Activated CD8-positive, alpha-beta T cell treated with anti-CD3 and anti-CD28 coated beads for 36 hours (primary cell): ENCODE measurements at regions of chr4 and their contacts with region 1.

Region 1: GRCh38 chr4:15882675-15883086 is 55.9 kb downstream of the FGFBP1 start:
- DNase-seq: peak; percentile 59
- ATAC-seq: peak; percentile 92
- H3K4me3 Mint-ChIP-seq: no peak overlapping the region
- H3K27ac Mint-ChIP-seq: no peak overlapping the region
- H3K4me1 Mint-ChIP-seq: peaks cover 1% of the 10 kb centered on the region
- H3K27me3 Mint-ChIP-seq: peaks cover 2% of the 10 kb centered on the region
- CTCF ChIP-seq: peak; percentile 98

Region 2: GRCh38 chr4:15738877-15739276 is 143.8 kb before region 1 on chr4:
- CTCF ChIA-PET with region 1: interaction called, 14 read pairs
- POLR2A ChIA-PET with region 1: no interaction called
- intact Hi-C with region 1: loop called (anchors 10 kb)
- DNase-seq: peak; percentile 17
- ATAC-seq: peak; percentile 79
- H3K4me3 Mint-ChIP-seq: no peak overlapping the region
- H3K27ac Mint-ChIP-seq: peak overlapping the region; percentile 17
- H3K4me1 Mint-ChIP-seq: peaks cover 34% of the 10 kb centered on the region
- H3K27me3 Mint-ChIP-seq: no peaks in the 10 kb centered on the region
- CTCF ChIP-seq: no peak

Region 3: GRCh38 chr4:15778289-15779241 is 104.1 kb before region 1 on chr4 and contains the start of gene CD38:
- CTCF ChIA-PET with region 1: no interaction called
- POLR2A ChIA-PET with region 1: no interaction called
- intact Hi-C with region 1: no loop called
- DNase-seq: peak; percentile 84
- ATAC-seq: peak; percentile 81
- H3K4me3 Mint-ChIP-seq: peak within 1 kb of the TSS; percentile 85
- H3K27ac Mint-ChIP-seq: peak within 1 kb of the TSS; percentile 88
- H3K4me1 Mint-ChIP-seq: peaks cover 67% of the 10 kb centered on the region
- H3K27me3 Mint-ChIP-seq: peaks cover 15% of the 10 kb centered on the region
- CTCF ChIP-seq: no peak
- total RNA-seq, gene CD38: 24.3 to 25.6 TPM

Region 4: DNA sequence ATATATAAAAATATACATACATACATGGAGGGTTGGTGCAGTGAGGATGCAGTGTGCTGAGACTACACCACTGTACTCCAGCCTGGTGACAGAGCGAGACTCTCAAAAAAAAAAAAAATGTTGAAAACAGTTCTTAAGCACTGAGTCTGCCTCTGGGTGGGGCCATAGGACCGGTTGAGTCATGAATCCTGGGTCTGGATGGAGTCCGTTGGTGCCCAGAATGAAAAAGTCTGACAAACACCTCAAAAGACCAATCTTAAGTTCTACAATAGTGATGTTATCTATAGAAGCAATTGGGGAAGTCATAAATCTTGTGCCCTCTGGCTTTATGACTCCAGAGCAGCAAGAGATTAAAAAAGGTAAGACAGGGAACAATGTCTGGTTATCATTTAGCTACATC is 14.6 kb before region 1 on chr4:
- CTCF ChIA-PET with region 1: interaction called, 26 read pairs
- POLR2A ChIA-PET with region 1: no interaction called
- intact Hi-C with region 1: no loop called
- DNase-seq: peak; percentile 28
- ATAC-seq: peak; percentile 72
- H3K4me3 Mint-ChIP-seq: no peak overlapping the region
- H3K27ac Mint-ChIP-seq: no peak overlapping the region
- H3K4me1 Mint-ChIP-seq: no peaks in the 10 kb centered on the region
- H3K27me3 Mint-ChIP-seq: peaks cover 5% of the 10 kb centered on the region
- CTCF ChIP-seq: no peak

Region 5: DNA sequence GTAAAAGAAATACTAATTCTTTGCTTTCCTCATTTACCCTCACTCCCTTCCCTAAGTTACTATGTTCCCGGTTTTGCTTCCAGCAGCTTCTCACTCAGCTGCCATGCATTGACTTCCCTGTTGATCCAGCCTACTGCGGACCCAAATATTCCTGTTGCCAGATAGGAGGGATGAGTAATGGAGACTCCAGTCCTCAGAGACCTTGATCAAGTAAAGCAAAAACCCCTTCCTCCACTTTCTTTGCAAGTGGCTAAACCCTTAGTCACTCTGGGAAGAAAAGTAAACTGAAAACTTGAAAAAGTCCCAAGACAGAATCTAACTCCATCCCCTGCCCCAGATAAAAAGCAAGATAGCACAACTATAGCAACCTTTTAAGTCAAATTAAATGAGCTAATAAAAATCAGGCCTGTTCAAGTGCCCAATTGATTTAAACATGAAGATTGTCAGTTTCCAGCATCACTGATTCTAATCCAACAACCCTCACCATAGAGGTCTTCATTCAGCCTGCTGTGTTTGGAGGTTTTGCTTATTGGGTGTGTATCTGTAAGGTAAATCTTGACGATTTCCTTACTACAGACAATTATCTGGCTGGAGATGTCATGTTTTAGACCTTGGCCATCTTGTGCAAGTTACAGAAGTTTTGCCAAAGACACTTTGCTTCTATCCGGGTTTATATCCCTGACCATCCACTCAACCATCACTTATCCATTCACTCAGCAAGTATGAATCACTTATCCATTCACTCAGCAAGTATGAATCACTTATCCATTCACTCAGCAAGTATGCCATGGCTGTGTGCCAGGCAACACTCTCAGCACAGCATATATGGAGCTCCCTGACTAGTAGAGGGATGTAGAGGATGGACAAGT is 38.3 kb after region 1 on chr4:
- CTCF ChIA-PET with region 1: interaction called, 10 read pairs
- POLR2A ChIA-PET with region 1: no interaction called
- intact Hi-C with region 1: no loop called
- DNase-seq: no peak
- ATAC-seq: no peak
- H3K4me3 Mint-ChIP-seq: no peak overlapping the region
- H3K27ac Mint-ChIP-seq: no peak overlapping the region
- H3K4me1 Mint-ChIP-seq: no peaks in the 10 kb centered on the region
- H3K27me3 Mint-ChIP-seq: peaks cover 12% of the 10 kb centered on the region
- CTCF ChIP-seq: no peak

Region 6: DNA sequence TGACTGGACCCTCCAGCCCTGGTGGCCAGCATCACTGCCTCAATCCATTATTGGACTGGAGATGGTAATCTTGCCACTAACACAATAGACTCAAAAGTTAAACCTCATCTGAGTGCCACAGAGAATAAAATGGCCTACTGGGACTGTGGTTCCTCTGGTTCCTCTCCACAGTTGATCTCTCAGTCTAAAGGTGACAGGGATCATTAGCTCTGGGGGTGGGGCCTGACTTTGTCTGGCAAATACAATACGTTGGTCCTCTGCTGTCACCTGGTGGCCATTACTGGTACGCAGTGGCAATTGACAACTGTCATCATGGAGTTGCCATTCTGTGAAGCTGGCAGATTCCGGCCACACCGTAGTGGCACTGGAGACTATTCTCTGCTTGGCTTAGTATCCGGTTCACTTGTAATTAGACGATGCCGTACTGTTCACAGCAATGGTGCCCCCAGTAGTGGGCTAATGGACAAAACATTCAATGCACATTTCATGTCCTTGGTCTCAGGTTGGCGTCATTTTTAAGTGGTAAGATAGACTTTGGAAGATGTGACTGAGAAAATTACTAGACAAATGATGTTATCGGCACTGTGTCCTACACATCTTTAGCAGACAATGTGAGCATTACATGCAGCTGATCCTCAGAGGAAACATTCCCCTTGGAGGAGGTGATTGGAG is 73.6 kb after region 1 on chr4:
- CTCF ChIA-PET with region 1: interaction called, 203 read pairs
- POLR2A ChIA-PET with region 1: interaction called, 9 read pairs
- intact Hi-C with region 1: loop called (anchors 1 kb)
- DNase-seq: peak; percentile 96
- ATAC-seq: peak; percentile 90
- H3K4me3 Mint-ChIP-seq: no peak overlapping the region
- H3K27ac Mint-ChIP-seq: no peak overlapping the region
- H3K4me1 Mint-ChIP-seq: peaks cover 19% of the 10 kb centered on the region
- H3K27me3 Mint-ChIP-seq: peaks cover 2% of the 10 kb centered on the region
- CTCF ChIP-seq: peak; percentile 87

Region 7: DNA sequence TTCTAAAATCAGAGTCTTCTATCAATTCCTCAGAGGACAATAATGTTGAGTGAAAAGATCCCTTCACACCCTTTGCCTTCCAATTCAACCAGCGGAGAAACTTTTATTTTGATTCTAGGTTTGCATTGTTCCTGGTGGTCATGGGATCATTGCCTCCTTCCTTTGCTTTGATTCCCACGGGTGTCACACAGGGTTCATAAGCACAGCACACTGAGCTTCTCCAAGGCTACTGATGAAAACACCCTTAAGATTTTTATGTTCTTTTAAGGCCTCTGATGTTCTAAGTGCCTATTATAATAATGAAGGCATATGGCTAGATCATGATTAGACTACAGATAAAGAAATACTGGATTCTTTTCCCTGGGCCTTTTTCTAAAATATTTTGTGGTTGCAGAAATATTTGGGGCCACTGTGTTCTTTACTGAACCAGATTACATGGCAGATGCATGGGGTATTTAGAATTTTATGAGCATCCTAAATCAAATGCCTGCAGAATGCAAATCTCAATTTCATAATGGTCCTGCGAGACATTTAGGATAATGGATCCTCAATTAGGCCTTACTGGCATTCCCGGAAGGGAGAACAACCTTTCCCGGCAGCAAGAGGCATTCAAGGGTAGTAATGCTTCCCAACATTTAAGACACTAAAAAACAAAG is 124.2 kb after region 1 on chr4:
- CTCF ChIA-PET with region 1: interaction called, 55 read pairs
- POLR2A ChIA-PET with region 1: no interaction called
- intact Hi-C with region 1: no loop called
- DNase-seq: no peak
- ATAC-seq: no peak
- H3K4me3 Mint-ChIP-seq: no peak overlapping the region
- H3K27ac Mint-ChIP-seq: no peak overlapping the region
- H3K4me1 Mint-ChIP-seq: no peaks in the 10 kb centered on the region
- H3K27me3 Mint-ChIP-seq: peaks cover 2% of the 10 kb centered on the region
- CTCF ChIP-seq: no peak

Region 8: GRCh38 chr4:16225863-16226815 is 343.5 kb after region 1 on chr4 and contains the start of gene TAPT1:
- CTCF ChIA-PET with region 1: no interaction called
- POLR2A ChIA-PET with region 1: no interaction called
- intact Hi-C with region 1: no loop called
- DNase-seq: peak; percentile 80
- ATAC-seq: peak; percentile 82
- H3K4me3 Mint-ChIP-seq: peak within 1 kb of the TSS; percentile 91
- H3K27ac Mint-ChIP-seq: peak within 1 kb of the TSS; percentile 98
- H3K4me1 Mint-ChIP-seq: peaks cover 61% of the 10 kb centered on the region
- H3K27me3 Mint-ChIP-seq: no peaks in the 10 kb centered on the region
- CTCF ChIP-seq: no peak
- total RNA-seq, gene TAPT1: 34.2 to 35.5 TPM

Region 9: DNA sequence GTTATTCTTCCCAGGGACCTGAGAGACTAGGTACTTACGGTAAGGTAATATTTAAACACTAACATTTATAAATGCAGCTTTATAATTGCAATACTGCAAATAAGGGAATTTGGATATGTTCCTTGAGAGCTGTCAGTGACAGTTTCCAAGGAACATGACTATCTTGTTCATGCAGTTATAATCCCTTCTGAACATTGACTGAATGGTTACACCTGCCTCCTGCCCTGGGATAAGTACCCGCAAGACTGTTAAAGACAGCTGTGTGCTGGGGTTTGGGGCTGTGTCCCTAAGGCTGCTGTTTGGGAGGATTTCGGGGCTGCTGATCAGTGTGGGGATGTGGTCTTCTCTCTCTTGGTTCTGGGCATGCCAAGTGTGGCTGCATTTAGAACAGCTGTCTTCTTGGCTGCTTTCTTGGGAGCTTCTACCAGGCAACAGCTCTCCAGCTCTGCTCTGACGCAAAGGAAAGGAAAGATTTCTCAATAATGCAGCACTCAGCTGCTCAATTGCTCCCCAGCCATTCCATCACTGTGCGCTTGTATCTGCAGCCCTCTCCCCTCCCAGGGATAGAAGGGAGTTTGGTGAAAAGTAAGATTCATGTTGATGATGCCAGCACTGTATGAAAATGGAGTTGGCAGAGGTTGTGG is 642.4 kb after region 1 on chr4:
- CTCF ChIA-PET with region 1: no interaction called
- POLR2A ChIA-PET with region 1: no interaction called
- intact Hi-C with region 1: no loop called
- DNase-seq: no peak
- ATAC-seq: no peak
- H3K4me3 Mint-ChIP-seq: no peak overlapping the region
- H3K27ac Mint-ChIP-seq: no peak overlapping the region
- H3K4me1 Mint-ChIP-seq: no peaks in the 10 kb centered on the region
- H3K27me3 Mint-ChIP-seq: peaks cover 2% of the 10 kb centered on the region
- CTCF ChIP-seq: no peak